Sigmoid colon (tissue), 7 donors: ENCODE measurements at regions of chr20 and their contacts with region 1.

Region 1: DNA sequence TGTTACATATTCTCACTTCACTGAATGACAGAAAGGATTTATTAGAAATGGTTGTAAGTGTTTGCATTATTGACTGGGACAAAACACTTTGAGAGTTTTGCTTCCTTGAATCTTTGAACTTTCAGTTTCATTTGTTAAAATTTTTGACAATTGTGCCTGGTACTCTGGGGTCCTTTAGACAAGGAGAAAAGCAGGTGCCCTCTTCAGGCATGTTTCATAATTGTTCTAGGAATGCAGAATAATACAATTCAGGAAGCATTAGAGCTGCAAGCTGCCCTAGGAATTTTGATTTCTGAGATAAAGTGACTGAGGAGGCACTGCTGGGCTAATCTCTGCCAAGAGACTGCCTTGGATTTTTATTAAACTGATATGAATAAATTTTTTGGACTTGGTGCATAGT is 49.7 kb downstream of the TOP1 start:
- DNase-seq: no peak
- H3K4me3 ChIP-seq: no peak overlapping the region
- H3K27ac ChIP-seq: peak overlapping the region in 1 of 4 donors; percentile 26
- H3K4me1 ChIP-seq: peaks cover 0 to 56% (median 33%) of the 10 kb centered on the region in 4 donors
- H3K27me3 ChIP-seq: no peaks in the 10 kb centered on the region
- CTCF ChIP-seq: peak in 3 of 4 experiments; percentile 39 to 53 (median 51)
- EP300 ChIP-seq: no peak
- POLR2A ChIP-seq: no peak

Region 2: GRCh38 chr20:40990542-40991120 is 87.7 kb before region 1 on chr20:
- intact Hi-C with region 1: loop called (anchors 5 kb)
- DNase-seq: peak; percentile 89
- H3K4me3 ChIP-seq: no peak overlapping the region
- H3K27ac ChIP-seq: no peak overlapping the region
- H3K4me1 ChIP-seq: peaks cover 0 to 3% (median 0%) of the 10 kb centered on the region in 4 donors
- H3K27me3 ChIP-seq: no peaks in the 10 kb centered on the region
- CTCF ChIP-seq: peak; percentile 70 to 78 (median 76)
- EP300 ChIP-seq: no peak
- POLR2A ChIP-seq: no peak

Region 3: GRCh38 chr20:41028348-41029148 is 49.8 kb before region 1 on chr20 and contains the start of gene TOP1:
- intact Hi-C with region 1: loop called (anchors 5 kb)
- DNase-seq: peak; percentile 100
- H3K4me3 ChIP-seq: peak within 1 kb of the TSS; percentile 98 to 100 (median 100)
- H3K27ac ChIP-seq: peak within 1 kb of the TSS; percentile 98 to 100 (median 100)
- H3K4me1 ChIP-seq: peaks cover 0 to 43% (median 40%) of the 10 kb centered on the region in 4 donors
- H3K27me3 ChIP-seq: no peaks in the 10 kb centered on the region
- CTCF ChIP-seq: no peak
- EP300 ChIP-seq: peak in 1 of 4 donors; percentile 27
- POLR2A ChIP-seq: peak; percentile 97 to 98
- total RNA-seq, gene TOP1: 22.0 to 33.2 (median 22.4) TPM